ENCODE measurements at regions of chr3 and their contacts with region 1.

Region 1: GRCh38 chr3:70110066-70110465 is 110.5 kb downstream of the SAMMSON start:
- DNase-seq: no peak
- ATAC-seq: no peak
- H3K4me3 ChIP-seq: no peak overlapping the region
- H3K4me1 ChIP-seq: no peaks in the 10 kb centered on the region
- CTCF ChIP-seq: no peak

Region 2: GRCh38 chr3:69930564-69930963 is 179.5 kb before region 1 on chr3:
- intact Hi-C with region 1: no loop called
- DNase-seq: no peak
- ATAC-seq: no peak
- H3K4me3 ChIP-seq: no peak overlapping the region
- H3K4me1 ChIP-seq: no peaks in the 10 kb centered on the region
- CTCF ChIP-seq: no peak

Region 3: GRCh38 chr3:69970827-69971226 is 139.2 kb before region 1 on chr3:
- intact Hi-C with region 1: no loop called
- DNase-seq: no peak
- ATAC-seq: no peak
- H3K4me3 ChIP-seq: no peak overlapping the region
- H3K4me1 ChIP-seq: no peaks in the 10 kb centered on the region
- CTCF ChIP-seq: no peak

Region 4: GRCh38 chr3:70049761-70050160 is 60.3 kb before region 1 on chr3:
- intact Hi-C with region 1: no loop called
- DNase-seq: no peak
- ATAC-seq: no peak
- H3K4me3 ChIP-seq: no peak overlapping the region
- H3K4me1 ChIP-seq: no peaks in the 10 kb centered on the region
- CTCF ChIP-seq: no peak

Region 5: GRCh38 chr3:70358978-70359580 is 249.0 kb after region 1 on chr3:
- intact Hi-C with region 1: loop called in 1 of 2 experiments (anchors 10 kb)
- DNase-seq: peak in 1 of 3 donors; percentile 40
- ATAC-seq: no peak
- H3K4me3 ChIP-seq: no peak overlapping the region
- H3K4me1 ChIP-seq: no peaks in the 10 kb centered on the region
- CTCF ChIP-seq: no peak